ENCODE measurements at regions of chr6 and their contacts with region 1.

Region 1: GRCh38 chr6:56542364-56543331 is 100.0 kb downstream of the DST start:
- DNase-seq: peak; percentile 95 to 98
- H3K4me3 ChIP-seq: peak overlapping the region; percentile 71
- H3K27ac ChIP-seq: peak overlapping the region; percentile 99 to 100
- H3K4me1 ChIP-seq: no peaks in the 10 kb centered on the region
- H3K27me3 ChIP-seq: no peaks in the 10 kb centered on the region
- CTCF ChIP-seq: peak; percentile 42 to 66 (median 52)
- POLR2A ChIP-seq: peak; percentile 96 to 99

Region 2: DNA sequence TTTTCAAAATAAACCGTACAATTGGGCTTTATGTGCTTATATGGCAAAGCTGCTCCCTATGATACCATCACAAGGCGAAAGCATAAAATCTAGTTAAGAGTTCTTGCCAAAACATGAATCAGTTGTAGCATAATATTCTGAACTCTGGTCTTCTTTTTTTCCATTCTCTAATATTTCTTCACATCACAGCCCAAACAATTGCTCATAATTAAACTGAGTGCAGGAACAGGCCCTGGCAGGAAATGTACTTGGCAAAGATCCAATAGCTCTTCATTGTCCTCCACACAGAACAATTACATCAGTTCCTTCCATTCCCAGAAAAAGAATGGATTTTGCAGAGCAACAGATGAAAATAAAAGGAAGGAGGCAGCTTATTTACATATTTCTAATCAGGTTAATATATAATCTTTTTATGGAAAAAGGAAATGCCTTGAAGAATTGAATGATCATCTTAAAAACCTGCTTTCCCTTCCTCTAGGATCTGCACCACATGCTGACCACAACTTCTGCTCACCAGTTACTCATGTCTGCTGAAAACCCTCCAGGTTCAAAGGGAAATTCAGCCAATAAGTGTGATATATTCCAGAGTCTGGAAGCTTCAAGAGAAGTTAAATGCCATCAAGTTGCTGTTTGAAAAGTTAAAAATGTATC is 172.0 kb before region 1 on chr6:
- intact Hi-C with region 1: loop called (anchors 10 kb)
- DNase-seq: peak; percentile 60 to 89
- H3K4me3 ChIP-seq: no peak overlapping the region
- H3K27ac ChIP-seq: peak overlapping the region; percentile 93 to 96
- H3K4me1 ChIP-seq: peaks cover 18 to 21% of the 10 kb centered on the region in 2 donors
- H3K27me3 ChIP-seq: no peaks in the 10 kb centered on the region
- CTCF ChIP-seq: no peak
- POLR2A ChIP-seq: no peak

Region 3: DNA sequence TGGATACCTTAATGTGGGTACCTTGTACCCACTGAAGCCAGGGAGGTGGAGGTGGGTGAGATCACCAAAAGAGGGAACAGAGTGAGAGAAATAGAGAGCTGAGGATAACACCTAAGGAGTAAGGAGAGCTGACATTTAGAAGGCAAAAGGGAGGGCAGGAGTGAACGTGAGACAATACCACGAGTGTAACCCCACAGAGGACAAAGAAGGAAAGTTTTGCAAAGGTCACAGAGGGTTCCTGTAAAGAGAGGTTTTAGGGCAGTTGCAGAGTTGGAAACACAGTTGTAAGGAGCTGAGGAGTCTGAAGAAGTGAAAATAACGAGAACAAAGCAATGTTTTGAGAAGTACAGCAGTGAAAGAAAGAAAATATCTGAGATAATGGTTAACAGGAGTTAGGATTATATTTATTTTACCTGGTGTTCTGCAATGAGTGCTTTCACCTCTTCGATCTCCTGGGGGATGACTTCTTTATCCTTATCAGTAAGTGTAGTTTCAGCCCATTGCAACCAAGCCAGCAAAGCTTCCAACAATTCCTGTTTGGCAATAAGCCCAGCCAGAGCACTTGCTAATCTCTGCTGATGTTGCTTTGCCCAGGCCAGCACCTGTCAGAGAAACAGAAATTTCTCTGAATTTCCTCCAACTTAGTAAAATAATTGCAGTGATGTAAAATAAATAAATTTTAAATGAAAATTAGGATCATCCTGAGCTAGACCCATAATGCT is 66.8 kb before region 1 on chr6:
- intact Hi-C with region 1: no loop called
- DNase-seq: peak; percentile 33 to 51
- H3K4me3 ChIP-seq: no peak overlapping the region
- H3K27ac ChIP-seq: peak overlapping the region; percentile 8 to 17
- H3K4me1 ChIP-seq: no peaks in the 10 kb centered on the region
- H3K27me3 ChIP-seq: no peaks in the 10 kb centered on the region
- CTCF ChIP-seq: no peak
- POLR2A ChIP-seq: no peak